MCF 10A (cell line): ENCODE measurements at regions of chr1 and their contacts with region 1.

Region 1: DNA sequence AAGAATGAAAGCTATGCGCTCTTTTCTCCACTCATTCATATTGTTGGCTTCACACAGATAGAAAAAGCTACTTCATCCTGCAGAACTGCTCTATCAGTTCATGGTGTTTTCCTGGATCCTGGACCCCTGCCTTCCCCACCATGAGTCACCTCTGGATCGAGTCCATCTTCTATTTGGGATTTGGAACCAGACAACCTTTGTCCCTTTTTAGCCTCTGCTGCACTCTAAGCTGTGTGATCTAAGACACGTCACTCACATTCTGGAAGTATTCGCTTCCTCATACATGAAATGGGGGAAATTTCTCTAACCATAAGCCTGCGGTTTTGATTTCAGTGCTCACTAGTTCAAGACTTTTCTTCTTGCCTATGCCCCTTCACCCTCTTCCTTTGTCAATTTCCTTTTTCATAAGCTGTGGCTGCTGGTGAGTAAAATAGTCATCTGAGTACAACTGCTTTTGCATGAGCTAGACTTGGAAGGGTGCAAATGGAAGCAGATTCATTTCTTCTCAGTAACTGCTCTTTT is 14.1 kb upstream of the DEGS1 start:
- DNase-seq: peak; percentile 50
- H3K4me3 Mint-ChIP-seq: no peak overlapping the region
- H3K27ac Mint-ChIP-seq: no peak overlapping the region
- H3K4me1 Mint-ChIP-seq: peaks cover 12% of the 10 kb centered on the region
- H3K27me3 Mint-ChIP-seq: peaks cover 25% of the 10 kb centered on the region
- CTCF ChIP-seq: no peak

Region 2: DNA sequence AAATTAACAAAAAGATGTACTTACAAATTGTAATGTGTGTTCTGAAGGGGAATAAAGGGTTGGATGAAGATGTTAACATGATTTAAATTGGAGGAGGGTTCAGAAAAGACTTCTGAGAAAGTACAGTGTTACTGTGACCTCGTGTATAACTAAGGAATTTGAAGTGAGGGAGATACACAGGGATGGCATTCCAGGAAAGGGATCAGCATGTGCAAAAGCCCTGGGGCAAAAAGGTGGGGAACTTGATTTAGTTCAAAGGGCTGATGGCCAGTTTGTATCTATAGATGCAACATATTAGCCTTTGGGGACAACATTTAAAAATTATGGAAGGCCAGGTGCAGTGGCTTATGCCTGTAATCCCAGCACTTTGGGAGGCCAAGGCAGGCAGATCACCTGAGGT is 19.2 kb before region 1 on chr1:
- CTCF ChIA-PET with region 1: interaction called, 16 read pairs
- POLR2A ChIA-PET with region 1: interaction called, 5 read pairs
- intact Hi-C with region 1: no loop called
- DNase-seq: no peak
- H3K4me3 Mint-ChIP-seq: no peak overlapping the region
- H3K27ac Mint-ChIP-seq: peak overlapping the region; percentile 1
- H3K4me1 Mint-ChIP-seq: peaks cover 13% of the 10 kb centered on the region
- H3K27me3 Mint-ChIP-seq: no peaks in the 10 kb centered on the region
- CTCF ChIP-seq: no peak

Region 3: DNA sequence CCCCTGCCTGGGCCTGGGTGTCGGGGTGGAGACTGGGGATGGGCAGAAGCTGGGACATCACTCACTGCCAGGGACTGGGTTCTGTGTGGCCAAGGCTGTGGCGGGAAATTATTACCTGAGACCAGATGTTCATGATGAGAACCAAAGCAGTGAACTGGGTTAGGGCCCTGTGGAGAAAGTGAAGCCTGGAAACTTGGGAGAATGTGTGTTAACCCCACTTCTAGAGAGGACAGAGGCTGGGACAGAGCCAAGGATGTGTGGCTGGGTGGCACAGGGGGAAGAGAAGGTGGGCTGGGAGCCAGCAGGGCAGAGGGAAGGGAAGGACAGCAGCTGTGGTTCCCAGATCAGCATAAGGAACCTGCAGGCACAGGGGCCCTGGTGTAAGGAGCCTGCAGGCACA is 478.5 kb after region 1 on chr1:
- CTCF ChIA-PET with region 1: no interaction called
- POLR2A ChIA-PET with region 1: no interaction called
- intact Hi-C with region 1: no loop called
- DNase-seq: no peak
- H3K4me3 Mint-ChIP-seq: no peak overlapping the region
- H3K27ac Mint-ChIP-seq: no peak overlapping the region
- H3K4me1 Mint-ChIP-seq: peaks cover 7% of the 10 kb centered on the region
- H3K27me3 Mint-ChIP-seq: no peaks in the 10 kb centered on the region
- CTCF ChIP-seq: no peak